Activated CD4-positive, alpha-beta T cell treated with anti-CD3 and anti-CD28 coated beads, Interleukin-2, amount 10 ng/mL, durations not matched to agents 24 days and 14 days (primary cell): ENCODE measurements at regions of chrX and their contacts with region 1.

Region 1: DNA sequence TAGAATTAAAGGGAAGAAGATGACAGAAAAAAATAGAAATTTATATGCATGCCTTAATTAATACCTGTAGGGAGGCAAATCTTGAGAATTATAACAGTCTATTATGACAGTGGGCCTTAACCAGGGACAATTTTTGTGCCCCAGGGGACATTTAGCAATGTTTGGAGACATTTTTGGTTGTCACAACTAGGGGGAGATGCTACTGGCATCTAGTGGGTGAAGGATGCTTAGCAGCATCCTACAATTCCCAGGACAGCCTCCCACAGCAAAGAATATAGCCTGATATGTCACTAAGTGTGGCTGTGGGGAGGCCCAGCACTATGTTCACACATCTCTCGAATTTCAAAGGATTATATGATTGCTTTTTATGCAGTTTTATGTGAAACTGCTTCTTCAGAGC is 10.5 kb downstream of the GPR82 start:
- DNase-seq: peak; percentile 58
- H3K4me3 Mint-ChIP-seq: peak overlapping the region; percentile 34
- H3K27ac Mint-ChIP-seq: peak overlapping the region; percentile 85
- H3K4me1 Mint-ChIP-seq: peaks cover 25% of the 10 kb centered on the region
- H3K27me3 Mint-ChIP-seq: no peaks in the 10 kb centered on the region

Region 2: DNA sequence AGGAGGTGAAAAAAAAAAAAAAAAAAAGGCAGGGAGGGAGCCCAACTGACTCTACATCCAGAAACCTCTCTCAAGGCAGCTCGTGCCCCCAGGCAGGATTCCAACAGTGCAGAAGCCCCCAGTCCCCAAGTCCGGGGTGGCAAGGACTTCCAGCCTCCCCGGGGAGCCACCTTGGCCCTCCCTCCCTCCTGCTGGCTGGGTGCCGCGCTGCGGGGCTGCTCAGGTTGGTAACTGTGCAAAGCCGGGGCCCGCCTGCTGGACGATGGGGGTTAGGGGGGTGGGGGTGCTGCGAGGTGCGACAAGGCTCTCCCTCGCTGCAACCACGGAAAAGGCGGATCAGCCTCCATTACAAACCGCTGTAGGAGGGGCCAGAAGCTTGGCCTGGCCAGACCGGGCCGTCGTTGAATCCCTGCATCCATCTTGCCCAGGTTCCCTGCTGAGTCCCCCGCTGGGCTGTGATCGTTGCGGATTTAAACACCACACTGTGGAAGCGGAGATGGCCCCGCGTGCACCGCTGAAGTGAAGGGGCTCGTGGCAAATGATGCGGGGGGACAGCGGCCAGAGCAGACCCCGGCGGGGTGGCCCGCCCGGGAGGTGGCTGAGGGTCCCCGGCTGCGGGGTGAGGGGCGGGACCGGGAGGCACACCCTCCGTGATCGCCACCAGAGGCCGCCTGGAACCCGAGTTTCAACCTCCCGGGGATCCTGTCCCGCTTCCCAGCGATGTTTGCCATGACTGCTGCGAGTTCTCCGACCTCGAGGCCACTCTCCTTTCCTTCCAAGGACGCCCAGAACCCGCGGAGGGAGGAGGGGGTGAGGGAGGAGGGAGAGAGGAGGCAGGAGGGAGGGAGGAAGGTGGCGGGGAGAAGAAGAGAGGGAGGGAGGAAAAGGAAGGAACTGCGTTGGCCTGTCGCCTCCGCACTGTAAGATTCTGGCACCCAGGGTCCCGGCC is 458.6 kb before region 1 on chrX:
- intact Hi-C with region 1: loop called (anchors 10 kb)
- DNase-seq: peak; percentile 82
- H3K4me3 Mint-ChIP-seq: peak overlapping the region; percentile 82
- H3K27ac Mint-ChIP-seq: peak overlapping the region; percentile 81
- H3K4me1 Mint-ChIP-seq: peaks cover 7% of the 10 kb centered on the region
- H3K27me3 Mint-ChIP-seq: peaks cover 2% of the 10 kb centered on the region

Region 3: GRCh38 chrX:41688835-41689234 is 45.7 kb before region 1 on chrX and contains the start of gene GPR34:
- intact Hi-C with region 1: loop called (anchors 5 kb)
- DNase-seq: peak; percentile 65
- H3K4me3 Mint-ChIP-seq: no peak within 1 kb of the TSS
- H3K27ac Mint-ChIP-seq: no peak within 1 kb of the TSS
- H3K4me1 Mint-ChIP-seq: peaks cover 24% of the 10 kb centered on the region
- H3K27me3 Mint-ChIP-seq: no peaks in the 10 kb centered on the region
- total RNA-seq, gene GPR34: 0.16 and 0.43 TPM in 2 replicates

Region 4: DNA sequence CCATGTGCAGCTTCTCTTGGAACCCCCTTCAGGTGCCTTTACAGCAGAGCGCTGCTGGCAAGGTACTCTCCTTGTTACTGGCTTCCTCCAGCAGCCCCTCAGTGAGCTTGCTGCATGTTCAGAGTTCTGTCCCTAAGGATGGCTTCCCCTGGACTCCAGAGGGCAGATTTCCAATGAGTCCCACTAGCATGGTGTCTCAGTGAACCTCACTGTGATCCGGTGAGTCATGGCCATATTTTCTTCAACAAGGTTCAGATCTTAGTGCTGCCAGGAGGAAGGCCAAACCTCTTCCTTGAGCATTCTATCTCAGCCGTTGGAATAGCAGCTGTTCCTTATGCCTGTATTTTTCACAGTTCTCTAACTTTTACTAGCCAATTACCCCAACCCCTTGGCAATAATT is 90.0 kb after region 1 on chrX:
- intact Hi-C with region 1: no loop called
- DNase-seq: no peak
- H3K4me3 Mint-ChIP-seq: no peak overlapping the region
- H3K27ac Mint-ChIP-seq: no peak overlapping the region
- H3K4me1 Mint-ChIP-seq: peaks cover 5% of the 10 kb centered on the region
- H3K27me3 Mint-ChIP-seq: no peaks in the 10 kb centered on the region